PC-3 (cell line): ENCODE measurements at regions of chr2 and their contacts with region 1.

Region 1: DNA sequence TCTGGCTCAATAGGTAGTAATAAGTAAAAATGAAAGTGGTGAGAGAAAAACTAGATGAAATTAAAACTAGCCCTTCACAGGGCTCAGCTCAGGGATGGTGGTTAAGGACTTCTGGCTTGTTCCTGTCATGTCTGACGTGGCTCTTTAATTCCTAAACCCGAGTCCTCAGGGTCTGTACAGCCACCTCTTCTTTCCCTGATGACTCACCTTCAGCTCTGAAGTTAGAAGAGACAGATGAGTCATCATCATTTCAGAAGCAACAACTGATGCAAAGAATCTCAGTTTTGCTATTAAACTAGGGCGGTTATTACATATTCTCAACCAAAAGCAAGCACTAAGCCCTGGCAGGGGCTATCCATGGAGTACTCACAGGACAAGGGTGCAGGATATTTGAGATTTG is 24.0 kb upstream of the ITGB6 start:
- DNase-seq: peak; percentile 96
- ATAC-seq: peak; percentile 69
- H3K4me3 ChIP-seq: peak overlapping the region; percentile 28; the same call in 1 of the 2 replicates
- H3K27ac ChIP-seq: peak overlapping the region; percentile 87
- H3K4me1 ChIP-seq: peaks cover 94% of the 10 kb centered on the region
- H3K27me3 ChIP-seq: no peaks in the 10 kb centered on the region
- CTCF ChIP-seq: no peak

Region 2: GRCh38 chr2:160180172-160180571 is 43.9 kb before region 1 on chr2:
- CTCF ChIA-PET with region 1: no interaction called
- POLR2A ChIA-PET with region 1: interaction called, 15 read pairs
- intact Hi-C with region 1: no loop called
- DNase-seq: no peak
- ATAC-seq: no peak
- H3K4me3 ChIP-seq: no peak overlapping the region
- H3K27ac ChIP-seq: no peak overlapping the region
- H3K4me1 ChIP-seq: peaks cover 14% of the 10 kb centered on the region
- H3K27me3 ChIP-seq: no peaks in the 10 kb centered on the region
- CTCF ChIP-seq: no peak

Region 3: GRCh38 chr2:160210599-160211138 is 13.4 kb before region 1 on chr2:
- CTCF ChIA-PET with region 1: interaction called, 5 read pairs
- POLR2A ChIA-PET with region 1: no interaction called
- intact Hi-C with region 1: loop called (anchors 1 kb)
- DNase-seq: peak; percentile 75
- ATAC-seq: no peak
- H3K4me3 ChIP-seq: no peak overlapping the region
- H3K27ac ChIP-seq: no peak overlapping the region
- H3K4me1 ChIP-seq: peaks cover 83% of the 10 kb centered on the region
- H3K27me3 ChIP-seq: no peaks in the 10 kb centered on the region
- CTCF ChIP-seq: peak; percentile 90